ENCODE measurements at regions of chr20 and their contacts with region 1.

Region 1: GRCh38 chr20:25399037-25399430 is 8.4 kb upstream of the ABHD12 start:
- DNase-seq: peak in 1 of 2 donors; percentile 72
- ATAC-seq: peak; percentile 70 to 81 (median 79)
- H3K4me3 ChIP-seq: no peak overlapping the region
- H3K4me3 Mint-ChIP-seq: no peak overlapping the region
- H3K27ac ChIP-seq: no peak overlapping the region
- H3K27ac Mint-ChIP-seq: no peak overlapping the region
- H3K4me1 ChIP-seq: no peaks in the 10 kb centered on the region
- H3K4me1 Mint-ChIP-seq: no peaks in the 10 kb centered on the region
- H3K27me3 ChIP-seq: no peaks in the 10 kb centered on the region
- H3K27me3 Mint-ChIP-seq: peaks cover 0 to 4% of the 10 kb centered on the region in 2 donors
- CTCF ChIP-seq: peak; percentile 68

Region 2: DNA sequence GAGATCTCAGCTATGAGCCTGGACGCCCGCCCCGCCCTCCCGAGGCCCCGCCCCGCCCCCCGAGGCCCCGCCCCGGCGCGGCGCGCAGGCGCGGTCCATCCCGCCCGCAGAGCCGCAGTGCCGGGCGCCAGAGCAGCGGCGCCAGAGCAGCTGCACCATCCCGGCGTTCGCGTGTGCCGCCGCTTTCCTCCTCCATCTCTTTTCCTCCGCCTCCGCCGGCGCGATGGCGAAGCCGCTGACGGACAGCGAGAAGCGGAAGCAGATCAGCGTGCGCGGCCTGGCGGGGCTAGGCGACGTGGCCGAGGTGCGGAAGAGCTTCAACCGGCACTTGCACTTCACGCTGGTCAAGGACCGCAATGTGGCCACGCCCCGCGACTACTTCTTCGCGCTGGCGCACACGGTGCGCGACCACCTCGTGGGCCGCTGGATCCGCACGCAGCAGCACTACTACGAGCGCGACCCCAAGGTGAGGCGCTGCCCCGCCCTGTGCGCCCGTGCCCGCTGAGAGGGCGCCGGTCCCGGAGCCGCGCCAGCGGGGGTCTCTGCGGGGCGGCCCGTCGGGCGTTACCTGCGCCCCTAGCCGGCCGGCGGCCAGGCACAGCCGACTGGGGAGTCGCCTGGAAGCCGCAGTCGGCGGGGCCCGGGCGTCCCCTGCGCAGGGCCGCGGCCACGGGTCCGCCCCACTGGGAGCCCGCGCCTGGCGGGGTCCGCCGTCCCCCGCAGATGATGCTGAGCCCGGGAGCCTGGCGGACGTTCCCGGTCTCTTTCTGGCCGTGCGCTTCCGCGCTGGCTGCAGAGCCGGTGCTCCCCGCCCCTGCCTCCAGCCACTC is 150.9 kb before region 1 on chr20 and contains the start of gene PYGB:
- intact Hi-C with region 1: loop called (anchors 2 kb)
- DNase-seq: peak; percentile 68 to 89
- ATAC-seq: peak; percentile 89 to 91 (median 90)
- H3K4me3 ChIP-seq: peak within 1 kb of the TSS; percentile 94
- H3K4me3 Mint-ChIP-seq: peak within 1 kb of the TSS; percentile 97
- H3K27ac ChIP-seq: peak within 1 kb of the TSS; percentile 56
- H3K27ac Mint-ChIP-seq: peak within 1 kb of the TSS; percentile 74 to 79
- H3K4me1 ChIP-seq: peaks cover 21% of the 10 kb centered on the region
- H3K4me1 Mint-ChIP-seq: peaks cover 28 to 40% of the 10 kb centered on the region in 2 donors
- H3K27me3 ChIP-seq: no peaks in the 10 kb centered on the region
- H3K27me3 Mint-ChIP-seq: peaks cover 7 to 9% of the 10 kb centered on the region in 2 donors
- CTCF ChIP-seq: no peak
- total RNA-seq, gene PYGB: 39.4 to 55.4 (median 47.0) TPM

Region 3: DNA sequence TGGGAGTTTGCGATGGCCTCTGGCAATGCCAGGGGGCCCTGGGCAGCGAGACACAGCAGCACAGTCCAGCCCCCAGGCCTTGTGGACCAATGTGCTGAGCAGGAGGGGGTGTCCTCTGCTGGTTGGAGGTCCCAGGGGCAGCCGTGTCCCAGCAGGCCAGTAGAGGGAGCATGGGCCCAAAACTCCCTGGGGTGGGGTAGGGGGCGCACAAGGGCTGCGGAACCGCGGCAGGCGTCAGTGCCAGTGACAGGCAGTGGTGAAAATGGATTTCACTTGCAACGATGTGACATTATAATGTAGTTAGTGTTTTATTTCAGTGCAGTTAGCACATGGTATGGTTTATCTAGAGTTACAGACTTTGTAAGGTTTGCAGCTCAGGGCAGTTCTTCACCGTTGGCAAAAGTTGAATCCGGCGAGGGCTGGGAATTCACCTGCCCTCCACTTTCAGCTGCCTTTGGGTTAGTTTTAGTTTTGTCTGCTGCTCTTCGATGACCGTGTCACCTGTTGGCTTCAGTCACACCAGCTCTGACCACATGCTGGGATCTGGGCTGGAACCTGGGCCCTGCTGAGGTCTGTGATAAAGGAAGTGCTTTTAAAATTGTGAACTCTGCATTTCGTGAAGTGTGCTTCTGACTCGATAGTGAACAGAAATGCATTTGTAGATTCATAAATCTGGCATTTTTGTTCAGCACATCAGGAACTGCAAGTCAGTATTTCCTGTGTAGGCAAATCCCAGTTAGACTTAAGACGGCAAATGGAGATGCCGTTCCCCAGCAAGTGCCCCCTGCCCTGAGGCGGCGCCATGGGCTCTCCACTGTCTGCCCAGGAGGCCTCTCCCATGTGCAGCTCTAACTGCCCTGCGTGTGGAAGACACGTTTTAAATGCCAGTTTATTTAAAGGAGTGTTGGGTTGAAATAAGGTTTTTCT is 104.3 kb before region 1 on chr20:
- intact Hi-C with region 1: loop called (anchors 1 kb)
- DNase-seq: peak; percentile 34 to 77
- ATAC-seq: peak; percentile 72 to 91 (median 86)
- H3K4me3 ChIP-seq: no peak overlapping the region
- H3K4me3 Mint-ChIP-seq: no peak overlapping the region
- H3K27ac ChIP-seq: no peak overlapping the region
- H3K27ac Mint-ChIP-seq: peak overlapping the region; percentile 38
- H3K4me1 ChIP-seq: peaks cover 4% of the 10 kb centered on the region
- H3K4me1 Mint-ChIP-seq: no peaks in the 10 kb centered on the region
- H3K27me3 ChIP-seq: no peaks in the 10 kb centered on the region
- H3K27me3 Mint-ChIP-seq: no peaks in the 10 kb centered on the region
- CTCF ChIP-seq: peak; percentile 56

Region 4: DNA sequence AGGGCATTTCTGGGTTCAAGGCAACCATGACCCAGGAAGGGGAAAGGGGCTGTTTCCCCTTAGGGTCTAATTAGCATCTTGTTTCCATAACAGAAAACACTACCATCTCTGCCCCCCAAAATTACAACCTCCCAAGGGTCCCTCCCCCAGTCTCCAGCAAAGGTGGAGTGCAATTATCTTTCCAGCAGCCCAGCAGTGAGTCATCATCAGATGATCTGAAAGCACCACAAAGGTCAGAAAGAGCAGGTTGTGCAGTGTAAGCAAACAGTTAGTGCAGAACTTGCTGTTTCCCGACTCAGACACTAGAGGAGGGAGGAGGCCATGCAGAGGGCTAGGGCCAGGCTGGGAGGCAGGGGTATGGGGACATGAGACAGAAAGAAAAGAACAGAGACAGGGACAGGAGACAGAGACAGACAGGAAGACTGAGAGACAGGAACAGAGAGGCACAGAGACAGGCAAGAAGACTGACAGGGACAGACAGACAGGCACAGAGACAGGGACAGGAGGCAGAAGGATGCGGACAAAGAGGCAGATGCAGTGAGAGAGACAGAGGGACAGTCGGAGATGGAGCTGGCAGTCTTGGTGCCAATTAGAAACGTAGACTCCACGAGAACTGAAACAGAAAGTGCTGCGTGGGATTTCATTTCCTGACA is 88.6 kb before region 1 on chr20:
- intact Hi-C with region 1: loop called (anchors 5 kb)
- DNase-seq: peak in 1 of 2 donors; percentile 54
- ATAC-seq: peak; percentile 78 to 88 (median 85)
- H3K4me3 ChIP-seq: no peak overlapping the region
- H3K4me3 Mint-ChIP-seq: peak overlapping the region; percentile 65
- H3K27ac ChIP-seq: peak overlapping the region; percentile 52
- H3K27ac Mint-ChIP-seq: peak overlapping the region; percentile 52 to 89
- H3K4me1 ChIP-seq: peaks cover 45% of the 10 kb centered on the region
- H3K4me1 Mint-ChIP-seq: peaks cover 11 to 26% of the 10 kb centered on the region in 2 donors
- H3K27me3 ChIP-seq: no peaks in the 10 kb centered on the region
- H3K27me3 Mint-ChIP-seq: no peaks in the 10 kb centered on the region
- CTCF ChIP-seq: peak; percentile 30

Region 5: GRCh38 chr20:25360635-25361286 is 38.3 kb before region 1 on chr20:
- intact Hi-C with region 1: no loop called
- DNase-seq: no peak
- ATAC-seq: peak in 1 of 3 donors; percentile 41
- H3K4me3 ChIP-seq: no peak overlapping the region
- H3K4me3 Mint-ChIP-seq: no peak overlapping the region
- H3K27ac ChIP-seq: no peak overlapping the region
- H3K27ac Mint-ChIP-seq: no peak overlapping the region
- H3K4me1 ChIP-seq: peaks cover 9% of the 10 kb centered on the region
- H3K4me1 Mint-ChIP-seq: peaks cover 20 to 32% of the 10 kb centered on the region in 2 donors
- H3K27me3 ChIP-seq: no peaks in the 10 kb centered on the region
- H3K27me3 Mint-ChIP-seq: no peaks in the 10 kb centered on the region
- CTCF ChIP-seq: no peak

Measured in natural killer cell (primary cell).